WTC11 (cell line): ENCODE measurements at regions of chr12 and their contacts with region 1.

Region 1: DNA sequence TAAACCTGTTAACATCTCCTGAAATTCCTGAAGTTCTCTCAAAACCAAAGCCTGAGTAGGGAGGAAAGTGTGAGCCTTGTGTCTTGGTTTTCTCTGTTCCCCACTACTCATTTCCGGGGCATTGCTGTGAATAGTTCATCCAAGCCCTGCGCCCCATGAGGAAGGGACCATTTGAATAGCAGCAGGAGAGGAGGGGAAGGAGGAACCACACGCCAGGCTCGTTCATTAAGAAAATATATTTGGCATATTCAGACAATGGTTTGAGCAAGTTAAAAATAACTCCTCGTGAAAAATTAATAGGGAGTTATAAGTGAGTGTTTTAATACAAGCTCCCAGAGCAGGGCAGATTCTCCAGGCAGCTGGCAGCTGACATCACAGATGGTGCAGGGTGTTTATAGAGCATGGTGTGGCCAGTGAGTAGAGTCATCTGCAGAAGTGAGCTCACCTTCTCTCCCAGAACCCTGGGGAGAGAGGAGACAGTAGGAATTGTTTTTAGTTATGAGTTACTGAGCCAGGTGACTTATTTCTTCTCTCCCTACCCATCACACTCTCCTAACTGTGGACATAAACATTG is 29.5 kb upstream of the CISTR start:
- DNase-seq: no peak
- ATAC-seq: peak; percentile 77
- H3K4me3 Mint-ChIP-seq: no peak overlapping the region
- H3K27ac Mint-ChIP-seq: no peak overlapping the region
- H3K4me1 Mint-ChIP-seq: peaks cover 19% of the 10 kb centered on the region
- H3K27me3 Mint-ChIP-seq: no peaks in the 10 kb centered on the region; the same call in 1 of the 2 replicates
- CTCF ChIP-seq: no peak

Region 2: GRCh38 chr12:53791735-53792326 is 10.5 kb after region 1 on chr12:
- CTCF ChIA-PET with region 1: interaction called, 10 read pairs
- POLR2A ChIA-PET with region 1: no interaction called
- DNase-seq: peak; percentile 62
- ATAC-seq: peak; percentile 94
- H3K4me3 Mint-ChIP-seq: no peak overlapping the region
- H3K27ac Mint-ChIP-seq: no peak overlapping the region
- H3K4me1 Mint-ChIP-seq: peaks cover 11% of the 10 kb centered on the region; the same call in 1 of the 2 replicates
- H3K27me3 Mint-ChIP-seq: peaks cover 4% of the 10 kb centered on the region; the same call in 1 of the 2 replicates
- CTCF ChIP-seq: peak; percentile 69; the same call in 1 of the 2 replicates